ENCODE measurements at regions of chr3 and their contacts with region 1.

Region 1: GRCh38 chr3:167882067-167882667 is 146.6 kb downstream of the SERPINI1 start:
- DNase-seq: no peak
- ATAC-seq: peak in 1 of 4 donors; percentile 26
- H3K4me3 ChIP-seq: peak overlapping the region in 5 of 12 donors; percentile 9 to 17 (median 15)
- H3K27ac ChIP-seq: peak overlapping the region in 3 of 12 donors; percentile 13 to 15 (median 13)
- H3K4me1 ChIP-seq: peaks cover 0 to 18% (median 11%) of the 10 kb centered on the region in 12 donors
- H3K27me3 ChIP-seq: no peaks in the 10 kb centered on the region
- CTCF ChIP-seq: peak; percentile 68 to 84 (median 76)
- POLR2A ChIP-seq: no peak

Region 2: DNA sequence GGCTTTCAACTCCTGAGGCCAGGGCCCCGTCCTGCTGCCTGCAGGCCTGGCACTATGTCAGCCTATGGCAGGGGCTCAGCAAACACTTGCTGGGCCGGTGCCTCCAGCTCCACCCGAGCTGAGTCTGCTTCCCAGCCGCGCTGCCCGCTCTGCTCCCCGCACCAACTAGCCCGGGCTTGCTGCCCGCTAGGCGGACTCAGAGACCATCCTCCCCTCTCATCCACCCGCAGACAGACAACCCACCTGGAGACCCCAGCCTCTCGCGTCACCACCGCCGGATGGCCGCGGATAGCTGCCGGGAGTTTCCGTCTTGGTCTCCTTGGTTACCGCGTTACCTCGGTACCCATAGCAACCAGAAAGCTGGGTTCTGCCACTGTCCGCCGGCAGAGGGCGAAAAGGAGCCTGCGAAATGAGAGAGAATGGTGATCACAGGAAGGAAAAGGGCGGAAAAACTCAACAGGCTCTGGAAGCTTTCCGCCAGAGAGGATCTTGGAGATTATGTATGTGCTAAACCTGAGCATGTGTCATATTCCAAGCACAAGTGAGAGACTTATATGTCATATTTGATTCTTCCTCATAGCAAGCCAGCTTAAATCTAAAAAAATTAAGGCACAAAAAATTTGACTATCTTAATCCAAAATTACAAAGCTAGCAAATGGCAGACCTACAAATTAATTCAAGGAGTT is 502.0 kb before region 1 on chr3 and contains the start of gene ZBBX:
- intact Hi-C with region 1: loop called in 1 of 10 experiments (anchors 10 kb)
- DNase-seq: peak; percentile 66 to 88 (median 71)
- ATAC-seq: peak; percentile 78 to 98 (median 92)
- H3K4me3 ChIP-seq: peak within 1 kb of the TSS in 11 of 12 donors; percentile 18 to 59 (median 47)
- H3K27ac ChIP-seq: no peak within 1 kb of the TSS
- H3K4me1 ChIP-seq: peaks cover 0 to 9% (median 1%) of the 10 kb centered on the region in 12 donors
- H3K27me3 ChIP-seq: peaks cover 0 to 7% (median 0%) of the 10 kb centered on the region in 9 donors
- CTCF ChIP-seq: peak; percentile 68 to 92 (median 79)
- POLR2A ChIP-seq: no peak
- total RNA-seq, gene ZBBX: 0.42 TPM in 1 of 9 donors, not detected in the others

Region 3: GRCh38 chr3:167406875-167407492 is 475.2 kb before region 1 on chr3:
- intact Hi-C with region 1: loop called in 7 of 10 experiments (anchors 5 to 10 kb)
- DNase-seq: peak in 2 of 5 donors; percentile 14 to 31
- ATAC-seq: peak; percentile 76 to 97 (median 90)
- H3K4me3 ChIP-seq: no peak overlapping the region
- H3K27ac ChIP-seq: no peak overlapping the region
- H3K4me1 ChIP-seq: no peaks in the 10 kb centered on the region
- H3K27me3 ChIP-seq: no peaks in the 10 kb centered on the region
- CTCF ChIP-seq: peak; percentile 16 to 57 (median 40)
- POLR2A ChIP-seq: no peak

Region 4: DNA sequence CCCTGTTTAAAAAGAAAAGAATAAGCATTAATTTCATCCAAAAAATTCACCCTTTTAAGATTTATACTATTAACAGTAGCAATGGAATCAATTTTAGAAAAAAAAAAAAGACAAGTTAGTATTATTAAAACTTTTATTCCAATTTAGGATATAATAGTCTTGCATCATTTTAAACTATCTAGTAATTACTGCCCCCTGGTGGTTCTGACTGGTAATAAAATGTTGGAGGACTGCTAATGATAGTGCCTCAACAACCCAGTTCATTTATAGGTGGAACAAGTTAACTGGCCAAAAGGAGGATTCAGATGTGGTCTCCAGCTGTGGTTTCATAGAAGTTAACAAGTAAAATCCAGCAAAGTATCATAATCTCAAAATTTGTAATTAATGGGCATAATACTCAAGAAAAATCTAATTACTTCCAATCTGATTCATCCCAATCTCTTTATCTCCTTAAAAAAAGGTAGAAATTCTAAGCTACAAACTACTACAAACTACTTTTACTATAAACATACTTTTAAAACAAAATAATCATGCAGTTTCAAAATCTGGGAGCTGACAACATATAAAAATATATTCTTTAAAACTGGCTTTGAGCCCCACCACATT is 197.7 kb before region 1 on chr3:
- intact Hi-C with region 1: loop called in 1 of 10 experiments (anchors 5 kb)
- DNase-seq: peak in 2 of 5 donors; percentile 40
- ATAC-seq: peak in 3 of 4 donors; percentile 49 to 63 (median 53)
- H3K4me3 ChIP-seq: no peak overlapping the region
- H3K27ac ChIP-seq: no peak overlapping the region
- H3K4me1 ChIP-seq: no peaks in the 10 kb centered on the region
- H3K27me3 ChIP-seq: no peaks in the 10 kb centered on the region
- CTCF ChIP-seq: peak; percentile 62 to 85 (median 80)
- POLR2A ChIP-seq: no peak

Region 5: GRCh38 chr3:167740961-167741587 is 141.1 kb before region 1 on chr3:
- intact Hi-C with region 1: loop called in 4 of 10 experiments (anchors 5 to 10 kb)
- DNase-seq: no peak
- ATAC-seq: peak; percentile 37 to 74 (median 69)
- H3K4me3 ChIP-seq: no peak overlapping the region
- H3K27ac ChIP-seq: no peak overlapping the region
- H3K4me1 ChIP-seq: peaks cover 0 to 12% (median 5%) of the 10 kb centered on the region in 12 donors
- H3K27me3 ChIP-seq: no peaks in the 10 kb centered on the region
- CTCF ChIP-seq: peak in 10 of 12 donors; percentile 14 to 56 (median 40)
- POLR2A ChIP-seq: no peak

Region 6: DNA sequence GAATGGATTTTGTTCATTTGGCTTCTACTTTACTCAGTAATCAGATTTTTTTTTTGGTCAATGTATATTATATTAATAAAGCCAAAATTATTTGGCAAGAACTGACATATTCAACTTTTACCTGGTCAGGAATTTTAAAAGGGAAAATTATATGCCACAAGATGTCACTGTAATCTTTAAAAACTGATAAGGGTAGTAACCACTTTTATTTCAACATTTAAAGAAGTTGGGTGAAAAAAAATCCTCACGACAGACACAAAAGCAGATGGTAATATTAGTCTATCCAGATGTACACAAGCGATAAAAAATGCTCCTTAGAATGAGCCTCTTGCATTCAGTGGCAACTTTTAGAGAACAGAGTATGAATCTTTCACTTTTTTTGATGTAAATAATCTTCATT is 44.7 kb before region 1 on chr3:
- intact Hi-C with region 1: loop called (anchors 1 to 5 kb)
- DNase-seq: no peak
- ATAC-seq: peak in 1 of 4 donors; percentile 9
- H3K4me3 ChIP-seq: peak overlapping the region in 1 of 12 donors; percentile 2
- H3K27ac ChIP-seq: peak overlapping the region in 2 of 12 donors; percentile 12 to 36
- H3K4me1 ChIP-seq: peaks cover 0 to 23% (median 6%) of the 10 kb centered on the region in 12 donors
- H3K27me3 ChIP-seq: no peaks in the 10 kb centered on the region
- CTCF ChIP-seq: peak in 11 of 12 donors; percentile 17 to 64 (median 50)
- POLR2A ChIP-seq: no peak

Measured in heart left ventricle (tissue), 16 donors.